ENCODE measurements at regions of chr15 and their contacts with region 1.

Region 1: GRCh38 chr15:90482124-90483011 is 47.4 kb upstream of the CRTC3 start:
- DNase-seq: no peak
- H3K4me3 ChIP-seq: no peak overlapping the region
- CTCF ChIP-seq: peak; percentile 57

Region 2: DNA sequence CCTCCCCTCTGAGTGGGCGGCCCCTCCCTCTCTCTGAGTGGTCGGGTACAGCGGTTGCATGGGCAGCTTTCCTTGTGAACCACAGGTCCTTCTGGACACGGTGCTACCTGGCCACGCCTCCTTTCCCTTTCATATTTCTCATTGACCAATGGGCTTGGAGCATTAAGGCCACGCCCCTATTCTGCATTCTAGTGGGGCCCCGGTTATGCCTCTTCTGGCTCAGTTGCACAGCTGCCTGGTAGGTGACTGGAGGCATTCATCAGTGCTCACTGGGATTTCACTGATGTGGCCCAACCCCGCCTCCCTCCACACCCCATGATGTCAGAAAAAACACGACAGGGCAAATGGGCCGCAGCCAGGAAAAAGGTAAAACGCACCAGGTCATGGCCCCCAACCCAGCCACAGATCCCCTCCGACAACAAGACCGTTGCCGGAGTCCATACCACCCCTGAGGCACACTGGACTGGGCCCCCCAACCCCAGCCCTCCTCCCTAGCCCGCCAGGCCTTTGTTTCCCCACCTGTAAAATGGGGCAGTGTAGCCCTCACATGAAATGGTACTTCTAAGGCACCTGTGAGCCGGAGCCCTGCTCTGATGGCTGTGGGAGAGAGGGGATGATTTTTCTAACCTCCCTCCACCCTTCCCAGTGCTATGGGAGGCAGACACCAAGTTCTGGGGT is 190.6 kb before region 1 on chr15:
- CTCF ChIA-PET with region 1: interaction called, 39 read pairs
- POLR2A ChIA-PET with region 1: no interaction called
- DNase-seq: no peak
- H3K4me3 ChIP-seq: no peak overlapping the region
- CTCF ChIP-seq: no peak

Region 3: DNA sequence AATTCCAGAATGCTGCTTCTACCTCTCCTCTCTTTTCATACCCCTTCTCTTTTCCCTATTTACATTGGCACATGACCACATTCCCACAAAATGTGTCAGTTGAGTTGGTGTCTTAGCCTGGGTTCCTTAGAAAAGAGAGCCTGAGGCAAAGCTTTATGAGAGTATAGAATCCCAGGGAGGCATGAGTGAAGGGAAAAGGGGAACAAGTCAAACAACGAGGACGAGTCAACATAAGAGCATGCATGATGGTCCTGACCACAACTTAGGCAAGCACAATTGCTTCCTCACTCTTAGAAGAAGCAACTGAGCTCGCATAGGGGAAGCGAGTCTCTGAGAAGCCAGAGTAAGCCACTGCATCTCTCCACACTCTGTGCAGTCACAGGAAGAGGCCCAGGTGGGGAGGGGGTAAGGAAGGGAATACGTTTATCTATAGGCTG is 145.6 kb before region 1 on chr15:
- CTCF ChIA-PET with region 1: interaction called, 13 read pairs
- POLR2A ChIA-PET with region 1: no interaction called
- DNase-seq: no peak
- H3K4me3 ChIP-seq: no peak overlapping the region
- CTCF ChIP-seq: no peak

Region 4: GRCh38 chr15:90362936-90363212 is 119.5 kb before region 1 on chr15:
- CTCF ChIA-PET with region 1: interaction called, 94 read pairs
- POLR2A ChIA-PET with region 1: interaction called, 4 read pairs
- DNase-seq: peak; percentile 71
- H3K4me3 ChIP-seq: no peak overlapping the region
- CTCF ChIP-seq: no peak

Region 5: DNA sequence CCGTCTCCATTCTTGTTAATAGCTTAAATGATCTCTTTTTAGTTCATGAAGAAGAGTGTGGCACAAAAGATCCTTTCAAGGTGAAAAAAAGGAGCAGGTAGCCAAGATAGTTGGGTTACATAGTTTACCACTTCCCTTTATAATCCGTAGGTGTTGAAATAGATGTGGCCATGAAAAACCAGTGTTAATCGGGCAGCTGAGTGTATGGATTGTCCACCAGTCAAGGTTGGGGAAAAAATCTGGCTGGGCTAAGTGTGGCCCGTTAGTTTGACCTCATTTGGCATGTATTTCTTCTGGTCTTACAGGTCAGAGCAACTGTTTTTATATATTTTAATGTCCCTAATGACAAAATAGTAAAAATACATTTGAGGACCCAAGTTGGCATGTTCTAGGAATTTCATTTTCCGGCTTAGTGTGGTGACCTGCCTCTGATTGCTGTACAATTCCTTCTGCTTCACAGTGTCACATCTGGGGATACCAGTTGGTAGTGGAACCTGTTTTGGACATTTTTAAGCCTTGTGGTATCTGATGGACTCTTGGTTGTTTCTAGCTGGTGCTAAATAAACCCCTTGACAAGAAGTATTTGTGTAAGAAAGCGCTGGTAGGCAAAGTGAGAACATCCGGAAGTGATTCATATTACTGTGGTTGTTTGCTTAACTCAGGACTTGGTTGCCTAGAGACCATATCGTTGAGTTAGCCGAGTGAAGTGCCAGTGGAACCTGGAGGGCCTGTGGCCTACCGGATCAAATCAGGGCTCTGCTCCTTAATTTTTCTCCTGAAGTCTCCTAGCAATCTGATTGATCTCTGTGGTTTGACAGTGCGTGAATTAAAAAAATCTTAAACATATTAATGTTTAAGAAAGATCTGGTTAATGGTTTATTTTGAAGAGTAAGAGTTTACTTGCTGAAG is 81.7 kb before region 1 on chr15:
- CTCF ChIA-PET with region 1: interaction called, 12 read pairs
- POLR2A ChIA-PET with region 1: no interaction called
- DNase-seq: peak; percentile 88
- H3K4me3 ChIP-seq: no peak overlapping the region
- CTCF ChIP-seq: no peak

Region 6: DNA sequence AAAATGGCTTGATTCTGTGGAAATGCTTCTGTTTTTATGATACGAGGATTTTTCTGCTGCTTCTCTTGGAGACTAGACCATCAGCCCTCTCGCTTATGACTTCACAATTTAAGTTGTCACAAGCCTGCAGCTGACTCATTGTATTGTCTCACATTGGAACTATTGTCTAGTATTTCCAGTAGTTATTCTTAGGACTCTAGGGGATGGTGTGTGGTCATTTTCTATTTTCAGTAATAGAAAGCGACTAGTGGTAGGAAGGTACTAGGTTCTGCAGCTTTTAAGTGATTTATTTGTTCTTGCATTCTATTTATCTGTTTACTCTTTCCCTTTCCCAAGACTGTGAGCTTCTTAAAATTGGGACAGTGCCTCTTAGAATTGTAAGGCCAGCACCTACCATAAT is 19.0 kb before region 1 on chr15:
- CTCF ChIA-PET with region 1: interaction called, 104 read pairs
- POLR2A ChIA-PET with region 1: no interaction called
- DNase-seq: peak; percentile 33
- H3K4me3 ChIP-seq: no peak overlapping the region
- CTCF ChIP-seq: no peak

Region 7: GRCh38 chr15:90497912-90498311 is 15.5 kb after region 1 on chr15:
- CTCF ChIA-PET with region 1: interaction called, 14 read pairs
- POLR2A ChIA-PET with region 1: interaction called, 4 read pairs
- DNase-seq: no peak
- H3K4me3 ChIP-seq: no peak overlapping the region
- CTCF ChIP-seq: no peak

Measured in AG04449 (cell line).